Activated CD4-positive, alpha-beta memory T cell treated with anti-CD3 and anti-CD28 coated beads, Interleukin-2, amount 10 ng/mL, durations not matched to agents 7 days and 5 days (primary cell): ENCODE measurements at regions of chr11 and their contacts with region 1.

Region 1: DNA sequence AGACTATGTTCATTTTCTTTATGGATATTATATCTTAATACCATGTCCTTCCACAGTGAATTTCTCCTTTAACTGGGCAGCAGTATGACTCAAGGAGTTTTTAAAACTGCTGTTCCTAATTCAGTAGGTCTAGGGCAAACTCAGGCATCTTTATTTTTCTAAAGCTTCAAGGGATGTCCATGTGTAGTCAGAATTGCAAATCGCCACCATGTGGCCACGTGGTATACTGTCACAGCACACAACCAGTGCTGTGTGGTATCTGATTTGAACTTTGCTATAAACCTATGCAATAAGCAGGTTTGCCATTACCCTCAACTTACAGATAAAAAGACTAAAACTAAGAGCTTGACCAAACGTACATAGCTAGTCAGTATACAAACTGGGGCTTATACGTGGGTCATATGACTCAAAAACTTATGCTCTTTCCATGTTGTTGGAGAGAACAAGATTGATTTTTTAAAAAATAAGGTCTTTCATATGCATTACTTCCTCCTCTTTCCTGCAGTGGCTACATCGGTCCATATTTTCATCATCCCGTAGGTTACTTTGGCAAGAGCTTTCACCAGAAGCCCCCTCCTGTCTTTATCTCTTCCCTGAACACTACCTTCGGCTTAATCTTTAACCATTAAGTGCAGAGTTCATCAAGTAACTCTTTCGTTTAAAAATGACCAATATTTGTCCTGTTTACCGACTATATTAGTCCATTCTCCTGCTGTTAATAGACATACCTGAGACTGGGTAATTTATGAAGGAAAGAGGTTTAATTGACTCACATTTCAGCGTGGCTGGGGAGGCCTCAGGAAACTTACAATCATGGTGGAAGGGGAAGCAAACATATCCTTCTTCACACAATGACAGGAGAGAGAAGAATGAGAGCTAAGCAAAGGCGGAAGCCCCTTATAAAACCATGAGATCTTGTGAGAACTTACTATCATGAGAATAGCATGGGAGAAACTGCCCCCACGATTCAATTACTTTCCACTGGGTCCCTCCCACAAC is 8.0 kb upstream of the HTATIP2 start:
- DNase-seq: peak; percentile 52
- H3K4me3 Mint-ChIP-seq: no peak overlapping the region
- H3K27ac Mint-ChIP-seq: no peak overlapping the region
- H3K4me1 Mint-ChIP-seq: peaks cover 5% of the 10 kb centered on the region
- H3K27me3 Mint-ChIP-seq: peaks cover 7% of the 10 kb centered on the region

Region 2: GRCh38 chr11:20327377-20327935 is 28.1 kb before region 1 on chr11:
- CTCF ChIA-PET with region 1: no interaction called
- POLR2A ChIA-PET with region 1: no interaction called
- DNase-seq: no peak
- H3K4me3 Mint-ChIP-seq: no peak overlapping the region
- H3K27ac Mint-ChIP-seq: no peak overlapping the region
- H3K4me1 Mint-ChIP-seq: no peaks in the 10 kb centered on the region
- H3K27me3 Mint-ChIP-seq: peaks cover 7% of the 10 kb centered on the region

Region 3: GRCh38 chr11:20373147-20373546 is 17.6 kb after region 1 on chr11:
- CTCF ChIA-PET with region 1: interaction called, 16 read pairs
- POLR2A ChIA-PET with region 1: no interaction called
- DNase-seq: no peak
- H3K4me3 Mint-ChIP-seq: no peak overlapping the region
- H3K27ac Mint-ChIP-seq: no peak overlapping the region
- H3K4me1 Mint-ChIP-seq: peaks cover 35% of the 10 kb centered on the region
- H3K27me3 Mint-ChIP-seq: no peaks in the 10 kb centered on the region